ENCODE measurements at regions of chr2 and their contacts with region 1.

Region 1: GRCh38 chr2:28941008-28941407 is 40.1 kb upstream of the TOGARAM2 start:
- DNase-seq: no peak
- H3K4me3 ChIP-seq: no peak overlapping the region
- H3K27ac ChIP-seq: no peak overlapping the region
- H3K4me1 ChIP-seq: no peaks in the 10 kb centered on the region
- H3K27me3 ChIP-seq: no peaks in the 10 kb centered on the region
- CTCF ChIP-seq: no peak
- EP300 ChIP-seq: no peak
- POLR2A ChIP-seq: no peak
- RAD21 ChIP-seq: no peak

Region 2: GRCh38 chr2:28951910-28952815 is 11.2 kb after region 1 on chr2:
- CTCF ChIA-PET with region 1: interaction called, 8 read pairs
- POLR2A ChIA-PET with region 1: interaction called, 16 read pairs
- DNase-seq: no peak
- H3K4me3 ChIP-seq: no peak overlapping the region
- H3K27ac ChIP-seq: no peak overlapping the region
- H3K4me1 ChIP-seq: peaks cover 4 to 9% (median 6%) of the 10 kb centered on the region in 4 experiments; a peak in 6 of 7 replicates
- H3K27me3 ChIP-seq: peaks cover 0 to 1% (median 0%) of the 10 kb centered on the region in 4 experiments; a peak in 1 of 7 replicates
- CTCF ChIP-seq: no peak
- EP300 ChIP-seq: no peak
- POLR2A ChIP-seq: no peak
- RAD21 ChIP-seq: no peak

Region 3: DNA sequence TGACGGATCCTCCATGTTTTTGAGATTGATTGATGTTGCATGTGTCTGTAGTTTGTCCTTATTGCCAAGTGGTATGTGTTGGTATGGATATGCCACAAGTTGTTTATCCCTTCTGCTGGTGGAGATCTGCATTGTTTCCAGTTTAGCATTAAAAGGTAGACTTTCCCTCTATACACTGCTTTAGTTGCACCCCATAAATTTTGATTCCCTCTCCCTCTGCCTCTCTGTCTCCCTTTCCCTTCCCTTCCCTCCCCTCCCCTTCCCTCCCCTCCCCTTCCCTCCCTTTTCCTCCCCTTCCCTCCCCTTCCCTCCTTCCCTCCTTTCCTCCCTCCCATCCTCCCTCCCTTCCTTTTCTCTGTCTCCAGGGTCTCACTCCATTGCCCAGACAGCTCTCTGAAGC is 21.5 kb after region 1 on chr2:
- CTCF ChIA-PET with region 1: no interaction called
- POLR2A ChIA-PET with region 1: no interaction called
- DNase-seq: no peak
- H3K4me3 ChIP-seq: no peak overlapping the region
- H3K27ac ChIP-seq: no peak overlapping the region
- H3K4me1 ChIP-seq: peaks cover 0 to 3% (median 0%) of the 10 kb centered on the region in 4 experiments; a peak in 1 of 7 replicates
- H3K27me3 ChIP-seq: no peaks in the 10 kb centered on the region
- CTCF ChIP-seq: no peak
- EP300 ChIP-seq: no peak
- POLR2A ChIP-seq: no peak
- RAD21 ChIP-seq: no peak

Region 4: DNA sequence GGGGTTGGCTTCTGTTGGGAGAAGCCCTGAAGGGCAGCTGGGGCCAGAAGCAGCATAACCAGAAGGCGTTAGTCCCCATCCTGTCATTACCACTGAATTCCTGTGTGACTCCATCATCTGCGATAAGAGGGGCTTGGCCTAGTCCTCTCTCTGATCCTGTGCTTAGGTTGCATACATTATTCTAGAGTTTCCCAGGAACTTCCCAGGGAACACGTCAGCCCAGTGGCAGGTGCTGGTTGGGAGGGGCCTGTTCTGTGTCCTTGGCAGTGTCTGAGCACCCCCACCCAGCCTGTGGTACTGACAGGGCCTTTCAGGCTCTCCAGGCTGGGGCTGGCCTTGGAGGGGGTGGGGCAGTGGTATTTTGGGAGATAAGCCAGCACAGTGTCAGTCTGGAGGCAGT is 35.6 kb after region 1 on chr2:
- CTCF ChIA-PET with region 1: no interaction called
- POLR2A ChIA-PET with region 1: no interaction called
- DNase-seq: no peak
- H3K4me3 ChIP-seq: no peak overlapping the region
- H3K27ac ChIP-seq: no peak overlapping the region
- H3K4me1 ChIP-seq: peaks cover 0 to 2% (median 0%) of the 10 kb centered on the region in 4 experiments; a peak in 2 of 7 replicates
- H3K27me3 ChIP-seq: no peaks in the 10 kb centered on the region
- CTCF ChIP-seq: no peak
- EP300 ChIP-seq: no peak
- POLR2A ChIP-seq: no peak
- RAD21 ChIP-seq: no peak

Measured in H1 (cell line).